ENCODE measurements at regions of chr9 and their contacts with region 1.

Region 1: GRCh38 chr9:34252670-34253459 is 74.0 kb downstream of the UBAP1 start:
- DNase-seq: peak; percentile 67 to 71
- ATAC-seq: peak; percentile 59 to 76; a peak in 5 of 6 replicates
- H3K4me3 ChIP-seq: no peak overlapping the region
- H3K27ac ChIP-seq: peak overlapping the region; percentile 73 to 76
- H3K4me1 ChIP-seq: peaks cover 38% of the 10 kb centered on the region
- CTCF ChIP-seq: peak; percentile 93
- EP300 ChIP-seq: no peak
- POLR2A ChIP-seq: no peak
- RAD21 ChIP-seq: peak; percentile 61 to 69

Region 2: DNA sequence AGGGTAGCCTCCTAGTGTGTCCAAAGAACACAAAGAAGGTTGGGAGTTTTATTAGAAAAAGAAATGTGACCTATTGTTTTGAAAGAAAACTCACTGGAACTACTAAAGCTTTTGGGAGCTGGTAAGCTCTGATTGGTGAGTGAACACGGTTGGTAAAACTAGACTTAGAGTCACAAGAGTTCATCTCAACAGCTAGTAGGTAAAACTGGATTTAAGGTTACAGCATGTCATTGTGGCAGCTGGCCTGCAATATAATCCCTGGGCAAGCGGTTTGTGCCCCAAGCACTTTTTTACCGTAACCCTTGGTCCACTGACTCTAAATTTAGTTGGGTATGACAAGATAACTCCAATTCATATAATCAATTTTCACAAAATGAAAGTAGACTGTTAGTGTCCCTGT is 251.6 kb before region 1 on chr9:
- CTCF ChIA-PET with region 1: interaction called, 10 read pairs
- POLR2A ChIA-PET with region 1: no interaction called
- DNase-seq: no peak
- ATAC-seq: no peak
- H3K4me3 ChIP-seq: no peak overlapping the region
- H3K27ac ChIP-seq: no peak overlapping the region
- H3K4me1 ChIP-seq: no peaks in the 10 kb centered on the region
- CTCF ChIP-seq: no peak
- EP300 ChIP-seq: no peak
- POLR2A ChIP-seq: no peak
- RAD21 ChIP-seq: no peak

Region 3: DNA sequence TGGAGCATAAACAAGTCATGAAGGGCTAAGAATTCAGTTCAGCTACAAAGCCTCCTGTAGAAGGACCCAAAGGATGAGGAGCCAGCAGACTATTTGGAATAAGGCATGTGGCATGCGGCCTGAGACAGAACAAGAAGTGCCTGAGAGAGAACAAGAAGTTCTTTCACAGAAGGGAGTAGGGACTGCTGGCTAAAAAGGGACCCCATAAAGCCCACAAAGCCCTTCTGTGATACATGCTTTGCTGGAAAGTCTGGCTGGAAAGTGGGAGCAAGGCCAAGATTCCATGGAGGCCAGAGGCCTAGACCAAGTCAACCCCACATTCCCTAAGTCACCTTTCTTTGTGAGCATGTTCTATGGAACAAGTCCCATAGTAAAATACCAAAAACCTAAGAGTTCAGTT is 168.3 kb before region 1 on chr9:
- CTCF ChIA-PET with region 1: interaction called, 20 read pairs
- POLR2A ChIA-PET with region 1: no interaction called
- DNase-seq: no peak
- ATAC-seq: no peak; a peak in 1 of 6 replicates
- H3K4me3 ChIP-seq: no peak overlapping the region
- H3K27ac ChIP-seq: no peak overlapping the region
- H3K4me1 ChIP-seq: no peaks in the 10 kb centered on the region
- CTCF ChIP-seq: no peak
- EP300 ChIP-seq: no peak
- POLR2A ChIP-seq: no peak
- RAD21 ChIP-seq: no peak

Region 4: DNA sequence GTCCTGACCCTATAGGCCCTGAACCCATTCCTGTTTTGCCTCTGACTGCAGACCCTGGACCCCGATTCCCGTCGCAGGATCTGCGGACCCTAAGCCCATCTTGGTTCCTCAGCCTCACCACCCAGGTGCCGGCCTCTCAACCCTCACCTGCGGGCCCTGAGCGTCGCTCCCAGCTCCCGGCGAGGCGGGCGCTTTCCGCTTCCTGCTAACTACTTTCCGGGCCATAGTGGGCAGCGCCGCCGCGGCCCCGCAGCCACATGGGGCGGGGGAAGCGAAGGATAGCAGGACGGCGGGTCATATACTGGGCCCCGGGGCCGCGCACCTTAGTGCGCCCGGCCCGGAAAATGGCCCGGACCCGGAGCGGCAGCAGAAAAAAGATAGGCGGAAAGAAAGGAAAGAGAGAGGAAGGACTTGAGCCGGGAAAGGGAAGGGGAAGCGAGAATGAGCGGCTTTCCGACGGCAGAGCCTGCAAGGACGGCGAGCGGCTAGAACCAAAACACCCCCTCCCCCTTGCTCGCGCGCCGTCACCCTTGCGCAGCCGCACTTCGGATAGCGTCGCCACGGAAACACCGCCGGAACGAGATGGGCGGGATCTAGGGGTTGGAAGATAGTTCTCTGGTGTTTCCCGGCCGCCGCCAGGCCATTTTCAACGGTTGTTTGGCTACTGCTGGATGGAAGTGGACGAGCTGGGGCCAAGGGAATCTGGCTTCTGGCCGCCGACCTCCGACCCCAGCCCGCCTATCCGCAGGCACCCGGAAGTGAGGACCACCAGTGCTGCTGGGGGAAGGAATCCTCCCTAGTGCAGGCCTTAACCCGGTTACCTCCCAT is 126.4 kb before region 1 on chr9 and contains the start of gene DCAF12:
- CTCF ChIA-PET with region 1: interaction called, 18 read pairs
- POLR2A ChIA-PET with region 1: interaction called, 3 read pairs
- DNase-seq: peak; percentile 91 to 93
- ATAC-seq: peak; percentile 95 to 96
- H3K4me3 ChIP-seq: peak within 1 kb of the TSS; percentile 69
- H3K27ac ChIP-seq: peak within 1 kb of the TSS; percentile 88 to 89
- H3K4me1 ChIP-seq: peaks cover 27% of the 10 kb centered on the region
- CTCF ChIP-seq: no peak
- EP300 ChIP-seq: no peak
- POLR2A ChIP-seq: peak; percentile 51
- RAD21 ChIP-seq: no peak
- polyA plus RNA-seq, gene DCAF12: 56.5 and 73.6 TPM in 2 replicates

Region 5: DNA sequence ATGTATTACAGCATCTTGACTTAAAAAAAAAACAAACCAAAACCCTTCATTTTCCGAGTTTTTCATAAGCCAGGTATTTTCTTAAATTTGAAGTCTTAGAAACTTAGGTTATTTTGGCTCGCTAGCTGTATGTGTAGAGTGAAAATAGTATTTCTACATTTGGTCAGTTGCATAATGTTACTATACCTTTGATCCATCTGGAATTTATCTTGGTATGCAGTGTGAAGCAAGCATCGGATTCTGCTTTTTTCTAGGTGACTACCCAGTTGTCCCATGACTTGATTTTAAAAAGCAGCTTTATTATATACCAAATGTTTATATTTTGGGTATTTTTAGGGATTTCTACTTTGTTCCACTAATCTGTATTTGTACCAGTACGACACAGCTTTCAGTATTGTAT is 46.3 kb before region 1 on chr9:
- CTCF ChIA-PET with region 1: interaction called, 27 read pairs
- POLR2A ChIA-PET with region 1: interaction called, 6 read pairs
- DNase-seq: no peak
- ATAC-seq: no peak
- H3K4me3 ChIP-seq: no peak overlapping the region
- H3K27ac ChIP-seq: no peak overlapping the region
- H3K4me1 ChIP-seq: peaks cover 39% of the 10 kb centered on the region
- CTCF ChIP-seq: no peak
- EP300 ChIP-seq: no peak
- POLR2A ChIP-seq: no peak
- RAD21 ChIP-seq: no peak

Region 6: GRCh38 chr9:34279411-34279810 is 26.5 kb after region 1 on chr9:
- CTCF ChIA-PET with region 1: interaction called, 17 read pairs
- POLR2A ChIA-PET with region 1: no interaction called
- DNase-seq: no peak
- ATAC-seq: no peak
- H3K4me3 ChIP-seq: no peak overlapping the region
- H3K27ac ChIP-seq: no peak overlapping the region
- H3K4me1 ChIP-seq: no peaks in the 10 kb centered on the region
- CTCF ChIP-seq: no peak
- EP300 ChIP-seq: no peak
- POLR2A ChIP-seq: no peak
- RAD21 ChIP-seq: no peak

Region 7: GRCh38 chr9:34500623-34501267 is 247.9 kb after region 1 on chr9:
- CTCF ChIA-PET with region 1: no interaction called
- POLR2A ChIA-PET with region 1: no interaction called
- DNase-seq: peak; percentile 43 to 73
- ATAC-seq: peak; percentile 62 to 84
- H3K4me3 ChIP-seq: no peak overlapping the region
- H3K27ac ChIP-seq: no peak overlapping the region
- H3K4me1 ChIP-seq: peaks cover 6% of the 10 kb centered on the region; the same call in 1 of the 3 replicates
- CTCF ChIP-seq: peak; percentile 93
- EP300 ChIP-seq: no peak
- POLR2A ChIP-seq: no peak
- RAD21 ChIP-seq: peak; percentile 83 to 85

Measured in A549 (cell line).